Psoas muscle (tissue), 8 donors: ENCODE measurements at regions of chr2 and their contacts with region 1.

Region 1: DNA sequence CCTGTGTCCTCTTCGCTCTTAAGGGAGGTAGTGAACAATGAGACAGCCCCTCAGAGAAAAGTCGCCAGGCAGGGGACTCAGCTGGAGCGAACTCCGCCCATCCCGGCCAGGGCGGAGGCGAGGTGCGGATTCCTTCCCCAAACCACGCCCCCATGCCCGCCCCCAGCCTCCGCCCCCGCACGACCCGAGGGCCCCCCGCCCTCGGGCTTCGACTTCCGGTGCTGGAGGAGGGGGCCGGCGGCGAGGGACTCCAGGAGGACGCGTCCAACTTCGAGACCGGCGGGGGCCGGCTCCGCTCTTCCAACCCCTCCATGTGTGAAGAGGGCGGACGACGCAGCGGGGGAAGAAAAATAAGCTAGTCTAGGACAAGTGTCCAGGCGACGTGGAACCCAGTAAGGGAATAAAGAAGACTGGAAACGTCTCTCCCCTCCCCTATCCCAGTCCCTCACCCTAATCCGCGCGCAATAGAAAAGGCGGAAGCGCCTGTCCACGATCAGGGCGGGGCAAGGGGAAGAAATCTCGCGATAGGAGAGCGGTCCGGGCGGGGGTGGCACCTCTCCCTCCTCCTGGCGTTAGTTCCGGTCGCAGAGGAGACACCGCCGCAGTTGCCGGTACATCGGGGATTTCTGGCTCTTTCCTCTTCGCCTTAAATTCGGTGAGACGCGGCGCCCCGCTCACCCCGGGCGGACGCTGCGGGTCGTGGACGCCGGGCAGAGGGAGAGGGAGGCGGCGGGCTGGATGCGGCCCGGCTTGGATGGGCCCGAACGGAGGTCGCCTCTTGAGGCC is at the start of gene BZW1:
- DNase-seq: peak; percentile 95 to 98
- ATAC-seq: peak; percentile 93 to 94 (median 93)
- H3K4me3 ChIP-seq: peak within 1 kb of the TSS; percentile 91
- H3K27ac ChIP-seq: peak within 1 kb of the TSS; percentile 98
- H3K4me1 ChIP-seq: peaks cover 38% of the 10 kb centered on the region
- H3K27me3 ChIP-seq: no peaks in the 10 kb centered on the region
- CTCF ChIP-seq: no peak
- total RNA-seq, gene BZW1: 55.6 to 122 (median 114) TPM

Region 2: GRCh38 chr2:200765139-200765951 is 46.2 kb before region 1 on chr2:
- intact Hi-C with region 1: loop called in 1 of 2 experiments (anchors 2 kb)
- DNase-seq: peak in 1 of 2 donors; percentile 34
- ATAC-seq: peak; percentile 41 to 70 (median 58)
- H3K4me3 ChIP-seq: no peak overlapping the region
- H3K27ac ChIP-seq: peak overlapping the region; percentile 77
- H3K4me1 ChIP-seq: peaks cover 18% of the 10 kb centered on the region
- H3K27me3 ChIP-seq: no peaks in the 10 kb centered on the region
- CTCF ChIP-seq: no peak

Region 3: GRCh38 chr2:200864176-200864976 is 52.8 kb after region 1 on chr2 and contains the start of gene CLK1:
- intact Hi-C with region 1: loop called (anchors 2 to 5 kb)
- DNase-seq: peak; percentile 98 to 99
- ATAC-seq: peak; percentile 91 to 93 (median 92)
- H3K4me3 ChIP-seq: peak within 1 kb of the TSS; percentile 84
- H3K27ac ChIP-seq: peak within 1 kb of the TSS; percentile 100
- H3K4me1 ChIP-seq: peaks cover 29% of the 10 kb centered on the region
- H3K27me3 ChIP-seq: no peaks in the 10 kb centered on the region
- CTCF ChIP-seq: no peak
- total RNA-seq, gene CLK1: 30.6 to 71.0 (median 41.3) TPM

Region 4: GRCh38 chr2:201231781-201232466 is 420.4 kb after region 1 on chr2:
- intact Hi-C with region 1: no loop called
- DNase-seq: peak; percentile 74 to 82
- ATAC-seq: peak; percentile 40 to 86 (median 77)
- H3K4me3 ChIP-seq: no peak overlapping the region
- H3K27ac ChIP-seq: no peak overlapping the region
- H3K4me1 ChIP-seq: peaks cover 3% of the 10 kb centered on the region
- H3K27me3 ChIP-seq: no peaks in the 10 kb centered on the region
- CTCF ChIP-seq: peak; percentile 62